ENCODE measurements at regions of chr10 and their contacts with region 1.

Region 1: GRCh38 chr10:87761892-87762291 is 56.1 kb downstream of the ATAD1 start:
- DNase-seq: peak in 3 of 14 experiments; percentile 14 to 33 (median 24)
- ATAC-seq: no peak
- H3K4me3 ChIP-seq: no peak overlapping the region
- H3K4me3 Mint-ChIP-seq: no peak overlapping the region
- H3K27ac ChIP-seq: no peak overlapping the region
- H3K27ac Mint-ChIP-seq: no peak overlapping the region
- H3K4me1 ChIP-seq: no peaks in the 10 kb centered on the region
- H3K4me1 Mint-ChIP-seq: peaks cover 5% of the 10 kb centered on the region
- H3K27me3 ChIP-seq: no peaks in the 10 kb centered on the region
- H3K27me3 Mint-ChIP-seq: no peaks in the 10 kb centered on the region
- CTCF ChIP-seq: no peak

Region 2: GRCh38 chr10:87531908-87532622 is 229.8 kb before region 1 on chr10:
- CTCF ChIA-PET with region 1: no interaction called
- POLR2A ChIA-PET with region 1: no interaction called
- intact Hi-C with region 1: loop called in 1 of 2 experiments (anchors 10 kb)
- DNase-seq: no peak
- ATAC-seq: no peak
- H3K4me3 ChIP-seq: no peak overlapping the region
- H3K4me3 Mint-ChIP-seq: no peak overlapping the region
- H3K27ac ChIP-seq: no peak overlapping the region
- H3K27ac Mint-ChIP-seq: no peak overlapping the region
- H3K4me1 ChIP-seq: no peaks in the 10 kb centered on the region
- H3K4me1 Mint-ChIP-seq: peaks cover 12% of the 10 kb centered on the region
- H3K27me3 ChIP-seq: no peaks in the 10 kb centered on the region
- H3K27me3 Mint-ChIP-seq: no peaks in the 10 kb centered on the region
- CTCF ChIP-seq: no peak

Region 3: DNA sequence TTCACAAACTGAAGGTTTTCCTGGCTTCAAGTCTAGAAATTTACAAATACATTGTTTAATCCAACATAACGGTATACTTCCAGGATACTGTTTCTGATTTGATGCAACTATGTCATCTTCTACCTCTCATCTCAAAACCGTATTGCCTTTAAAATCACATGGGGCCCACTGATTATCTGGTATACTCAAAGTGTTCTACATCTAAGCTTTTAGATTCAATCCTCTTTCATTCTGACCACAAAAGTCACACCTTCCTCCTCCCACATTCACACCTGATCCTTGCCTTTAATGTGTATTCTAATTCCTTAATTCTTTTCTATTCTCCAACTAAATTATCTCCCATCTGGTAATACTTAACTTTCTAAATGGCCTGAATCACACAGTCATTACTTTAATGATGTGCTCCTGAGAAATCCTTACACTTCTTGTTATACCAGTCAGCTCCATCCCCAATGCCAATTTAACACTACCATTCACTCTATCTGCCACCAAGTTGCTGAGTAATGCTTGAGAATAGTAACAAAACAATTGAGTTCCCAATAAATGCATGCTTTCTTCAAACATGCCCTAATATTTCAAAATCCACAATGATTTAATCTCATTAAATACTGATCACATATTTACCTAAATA is 43.2 kb after region 1 on chr10:
- CTCF ChIA-PET with region 1: no interaction called
- POLR2A ChIA-PET with region 1: no interaction called
- intact Hi-C with region 1: no loop called
- DNase-seq: no peak
- ATAC-seq: no peak
- H3K4me3 ChIP-seq: no peak overlapping the region
- H3K4me3 Mint-ChIP-seq: no peak overlapping the region
- H3K27ac ChIP-seq: no peak overlapping the region
- H3K27ac Mint-ChIP-seq: no peak overlapping the region
- H3K4me1 ChIP-seq: no peaks in the 10 kb centered on the region
- H3K4me1 Mint-ChIP-seq: peaks cover 50% of the 10 kb centered on the region
- H3K27me3 ChIP-seq: no peaks in the 10 kb centered on the region
- H3K27me3 Mint-ChIP-seq: no peaks in the 10 kb centered on the region
- CTCF ChIP-seq: no peak